Calu3 (cell line): ENCODE measurements at regions of chr1 and their contacts with region 1.

Region 1: DNA sequence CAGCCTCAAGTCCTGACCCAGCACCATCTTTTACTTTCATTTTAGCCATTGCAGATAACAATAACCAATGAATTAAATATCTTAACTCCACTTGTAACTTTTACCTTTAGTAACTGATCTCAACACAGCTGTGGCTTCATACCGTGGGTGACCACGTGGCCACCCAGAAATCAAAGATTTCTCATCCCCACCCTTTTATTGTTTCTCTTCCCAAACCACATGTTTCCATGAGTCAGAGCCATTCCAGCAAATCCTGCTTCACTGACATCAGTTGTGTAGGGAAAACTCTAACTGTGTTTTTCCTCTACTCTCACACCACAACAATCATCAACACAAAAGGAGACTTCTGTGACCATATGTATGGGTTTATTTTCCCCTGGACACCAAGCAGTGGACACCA is 25.1 kb upstream of the BRDT start:
- DNase-seq: no peak
- H3K4me3 Mint-ChIP-seq: no peak overlapping the region
- H3K27ac Mint-ChIP-seq: peak overlapping the region; percentile 36
- H3K4me1 Mint-ChIP-seq: peaks cover 17% of the 10 kb centered on the region
- H3K27me3 Mint-ChIP-seq: no peaks in the 10 kb centered on the region
- CTCF ChIP-seq: no peak

Region 2: DNA sequence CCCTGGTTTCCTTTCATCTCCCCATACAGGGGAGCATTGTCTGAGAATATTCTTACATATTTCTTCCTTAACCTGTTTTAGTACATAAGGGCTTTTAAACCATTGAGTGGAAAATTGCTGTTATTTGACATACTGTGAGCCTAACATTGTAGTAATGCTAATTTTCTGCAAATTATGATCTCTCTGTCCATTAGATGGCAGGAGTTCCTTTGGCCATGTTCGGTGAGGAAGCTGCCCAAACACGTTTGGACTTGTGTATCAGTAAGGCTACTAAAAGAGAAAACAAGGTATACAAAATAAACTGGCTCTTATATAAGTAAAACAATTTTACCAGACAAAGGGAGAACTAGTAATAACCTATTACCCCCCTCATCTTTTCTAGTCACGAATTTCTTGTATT is 394.3 kb before region 1 on chr1:
- CTCF ChIA-PET with region 1: interaction called, 4 read pairs
- intact Hi-C with region 1: loop called (anchors 1 kb)
- DNase-seq: peak; percentile 25
- H3K4me3 Mint-ChIP-seq: no peak overlapping the region
- H3K27ac Mint-ChIP-seq: peak overlapping the region; percentile 45
- H3K4me1 Mint-ChIP-seq: peaks cover 10% of the 10 kb centered on the region
- H3K27me3 Mint-ChIP-seq: no peaks in the 10 kb centered on the region
- CTCF ChIP-seq: no peak

Region 3: DNA sequence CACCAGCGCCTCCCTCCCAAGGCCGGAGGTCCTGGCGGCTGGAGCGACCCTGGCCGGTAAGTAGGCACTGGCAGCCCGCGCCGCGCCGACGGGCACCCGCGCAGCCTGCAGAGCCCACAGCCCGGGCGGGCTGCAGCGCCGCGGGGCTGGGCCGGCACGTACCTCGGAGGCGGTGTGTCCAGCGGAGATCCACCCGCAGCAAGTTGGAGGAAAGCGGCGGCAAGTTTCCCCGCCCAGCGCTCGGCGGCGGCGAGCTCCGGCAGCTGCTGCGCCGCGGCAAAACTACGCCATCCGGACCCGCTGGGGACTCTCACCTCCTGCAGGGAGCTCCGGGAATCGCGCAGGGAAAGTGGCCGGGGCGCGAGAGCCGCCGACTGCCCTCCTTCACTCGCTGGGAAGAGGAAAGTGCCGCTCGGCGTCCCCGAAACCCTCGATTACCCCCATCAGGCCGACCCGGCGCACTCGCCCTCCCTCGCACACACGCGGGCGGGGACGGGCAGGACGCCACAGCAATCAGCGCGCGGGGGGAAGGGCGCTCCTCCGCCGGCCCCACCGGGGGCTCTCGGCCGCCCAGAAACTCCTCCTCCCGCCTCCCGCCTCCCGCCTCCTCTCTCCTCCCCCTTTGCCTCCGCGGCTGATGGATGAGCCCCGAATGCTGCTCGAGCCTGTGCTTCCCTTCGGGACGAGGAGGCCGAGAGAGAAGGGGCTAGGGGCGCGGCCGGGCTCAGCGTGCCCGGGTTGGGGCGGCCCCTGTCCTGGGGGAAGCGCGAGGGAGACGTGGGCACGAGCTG is 38.2 kb before region 1 on chr1 and contains the start of gene TGFBR3:
- CTCF ChIA-PET with region 1: interaction called, 4 read pairs
- intact Hi-C with region 1: loop called (anchors 2 kb)
- DNase-seq: peak; percentile 90
- H3K4me3 Mint-ChIP-seq: peak within 1 kb of the TSS; percentile 99
- H3K27ac Mint-ChIP-seq: peak within 1 kb of the TSS; percentile 77
- H3K4me1 Mint-ChIP-seq: peaks cover 40% of the 10 kb centered on the region
- H3K27me3 Mint-ChIP-seq: no peaks in the 10 kb centered on the region
- CTCF ChIP-seq: peak; percentile 37
- total RNA-seq, gene TGFBR3: 7.7 and 10.8 TPM in 2 replicates